CD4-positive, alpha-beta memory T cell (primary cell): ENCODE measurements at regions of chr3 and their contacts with region 1.

Region 1: DNA sequence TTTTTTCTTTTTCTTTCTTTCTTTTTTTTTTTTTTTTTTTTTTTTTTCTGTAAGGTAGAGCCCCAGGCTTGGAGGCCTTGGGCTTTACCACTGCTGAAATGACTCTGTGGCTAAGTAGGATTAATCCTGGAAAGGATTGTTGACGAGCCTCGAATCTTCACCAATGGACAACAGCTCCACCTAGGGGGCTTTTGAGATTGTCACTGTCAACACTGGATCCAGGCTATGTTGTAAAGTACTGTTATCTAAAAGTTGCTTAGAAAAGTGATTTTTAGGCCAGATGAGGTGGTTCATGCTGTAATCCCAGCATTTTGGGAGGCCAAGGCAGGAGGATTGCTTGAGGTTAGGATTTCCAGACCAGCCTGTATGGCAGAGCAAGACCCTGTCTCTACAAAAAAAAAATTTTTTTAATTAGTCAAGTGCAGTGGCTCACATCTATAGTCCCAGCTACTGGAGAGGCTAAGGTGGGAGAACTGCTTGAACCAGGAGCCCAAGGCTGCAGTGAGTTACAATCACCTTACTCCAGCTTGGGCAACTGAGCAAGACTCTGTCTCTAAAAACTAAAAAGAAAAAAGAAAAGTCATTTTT is 41.6 kb downstream of the KLHL18 start:
- DNase-seq: peak; percentile 47 to 63 (median 48)
- H3K4me3 ChIP-seq: no peak overlapping the region
- H3K4me3 Mint-ChIP-seq: no peak overlapping the region
- H3K27ac ChIP-seq: no peak overlapping the region
- H3K27ac Mint-ChIP-seq: peak overlapping the region in 1 of 7 donors; percentile 37
- H3K4me1 ChIP-seq: no peaks in the 10 kb centered on the region
- H3K4me1 Mint-ChIP-seq: peaks cover 0 to 5% (median 1%) of the 10 kb centered on the region in 4 donors
- H3K27me3 ChIP-seq: no peaks in the 10 kb centered on the region
- H3K27me3 Mint-ChIP-seq: no peaks in the 10 kb centered on the region

Region 2: DNA sequence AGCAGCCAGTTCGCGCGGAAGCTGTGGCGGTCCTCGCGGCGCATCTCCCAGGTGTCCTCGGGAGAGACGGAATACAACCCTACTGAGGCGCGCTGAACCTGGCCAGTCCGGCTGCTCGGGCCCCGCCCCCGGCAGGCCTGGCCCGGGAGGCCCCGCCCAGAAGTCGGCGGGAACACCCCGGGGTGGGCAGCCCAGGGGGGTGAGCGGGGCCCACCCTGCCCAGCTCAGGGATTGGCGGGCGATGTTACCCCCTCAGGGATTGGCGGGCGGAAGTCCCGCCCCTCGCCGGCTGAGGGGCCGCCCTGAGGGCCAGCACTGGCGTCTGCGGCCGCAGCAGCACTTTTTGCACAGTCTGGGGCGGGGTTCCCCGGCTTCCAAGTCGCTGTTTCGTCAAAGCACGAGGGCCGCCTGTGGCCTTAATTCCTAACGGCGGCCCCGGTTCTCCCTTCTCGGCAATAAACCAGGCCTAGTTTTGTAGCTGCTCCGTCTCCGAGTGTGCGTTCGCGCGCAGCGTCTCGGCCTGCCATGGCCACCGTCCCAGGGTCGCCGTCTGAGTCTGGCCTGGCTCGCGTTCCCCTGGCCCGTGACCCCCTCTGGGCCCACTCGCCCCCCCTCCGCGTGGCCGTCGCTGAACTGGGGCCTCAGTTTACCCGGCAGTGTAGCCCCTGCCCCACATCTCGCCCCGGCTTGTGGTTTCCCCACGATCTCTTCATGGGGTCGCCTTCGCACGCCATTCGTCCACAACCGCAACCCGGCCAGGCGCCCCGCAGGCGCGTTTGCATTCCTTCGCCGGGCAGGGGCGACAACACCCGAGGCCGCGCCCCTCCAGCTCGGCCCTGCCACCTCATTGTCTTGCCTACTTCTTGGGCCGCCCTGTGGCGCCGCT is 314.9 kb before region 1 on chr3:
- CTCF ChIA-PET with region 1: no interaction called
- POLR2A ChIA-PET with region 1: no interaction called
- intact Hi-C with region 1: loop called (anchors 10 kb)
- DNase-seq: peak; percentile 55 to 77 (median 64)
- H3K4me3 ChIP-seq: no peak overlapping the region
- H3K4me3 Mint-ChIP-seq: peak overlapping the region in 6 of 8 donors; percentile 43 to 74 (median 52)
- H3K27ac ChIP-seq: peak overlapping the region; percentile 14
- H3K27ac Mint-ChIP-seq: peak overlapping the region in 6 of 7 donors; percentile 4 to 79 (median 30)
- H3K4me1 ChIP-seq: no peaks in the 10 kb centered on the region
- H3K4me1 Mint-ChIP-seq: peaks cover 2 to 12% (median 7%) of the 10 kb centered on the region in 4 donors
- H3K27me3 ChIP-seq: no peaks in the 10 kb centered on the region
- H3K27me3 Mint-ChIP-seq: no peaks in the 10 kb centered on the region

Region 3: GRCh38 chr3:47113669-47114365 is 210.6 kb before region 1 on chr3:
- CTCF ChIA-PET with region 1: interaction called, 5 read pairs
- POLR2A ChIA-PET with region 1: no interaction called
- intact Hi-C with region 1: loop called (anchors 10 kb)
- DNase-seq: no peak
- H3K4me3 ChIP-seq: no peak overlapping the region
- H3K4me3 Mint-ChIP-seq: no peak overlapping the region
- H3K27ac ChIP-seq: no peak overlapping the region
- H3K27ac Mint-ChIP-seq: peak overlapping the region in 1 of 7 donors; percentile 28
- H3K4me1 ChIP-seq: peaks cover 9% of the 10 kb centered on the region
- H3K4me1 Mint-ChIP-seq: peaks cover 12 to 18% (median 16%) of the 10 kb centered on the region in 4 donors
- H3K27me3 ChIP-seq: no peaks in the 10 kb centered on the region
- H3K27me3 Mint-ChIP-seq: no peaks in the 10 kb centered on the region

Region 4: GRCh38 chr3:47791193-47791855 is 467.0 kb after region 1 on chr3:
- CTCF ChIA-PET with region 1: no interaction called
- POLR2A ChIA-PET with region 1: no interaction called
- intact Hi-C with region 1: no loop called
- DNase-seq: no peak
- H3K4me3 ChIP-seq: no peak overlapping the region
- H3K4me3 Mint-ChIP-seq: peak overlapping the region in 1 of 8 donors; percentile 46
- H3K27ac ChIP-seq: no peak overlapping the region
- H3K27ac Mint-ChIP-seq: no peak overlapping the region
- H3K4me1 ChIP-seq: no peaks in the 10 kb centered on the region
- H3K4me1 Mint-ChIP-seq: peaks cover 0 to 1% (median 0%) of the 10 kb centered on the region in 4 donors
- H3K27me3 ChIP-seq: no peaks in the 10 kb centered on the region
- H3K27me3 Mint-ChIP-seq: no peaks in the 10 kb centered on the region